ENCODE measurements at regions of chr3 and their contacts with region 1.

Region 1: DNA sequence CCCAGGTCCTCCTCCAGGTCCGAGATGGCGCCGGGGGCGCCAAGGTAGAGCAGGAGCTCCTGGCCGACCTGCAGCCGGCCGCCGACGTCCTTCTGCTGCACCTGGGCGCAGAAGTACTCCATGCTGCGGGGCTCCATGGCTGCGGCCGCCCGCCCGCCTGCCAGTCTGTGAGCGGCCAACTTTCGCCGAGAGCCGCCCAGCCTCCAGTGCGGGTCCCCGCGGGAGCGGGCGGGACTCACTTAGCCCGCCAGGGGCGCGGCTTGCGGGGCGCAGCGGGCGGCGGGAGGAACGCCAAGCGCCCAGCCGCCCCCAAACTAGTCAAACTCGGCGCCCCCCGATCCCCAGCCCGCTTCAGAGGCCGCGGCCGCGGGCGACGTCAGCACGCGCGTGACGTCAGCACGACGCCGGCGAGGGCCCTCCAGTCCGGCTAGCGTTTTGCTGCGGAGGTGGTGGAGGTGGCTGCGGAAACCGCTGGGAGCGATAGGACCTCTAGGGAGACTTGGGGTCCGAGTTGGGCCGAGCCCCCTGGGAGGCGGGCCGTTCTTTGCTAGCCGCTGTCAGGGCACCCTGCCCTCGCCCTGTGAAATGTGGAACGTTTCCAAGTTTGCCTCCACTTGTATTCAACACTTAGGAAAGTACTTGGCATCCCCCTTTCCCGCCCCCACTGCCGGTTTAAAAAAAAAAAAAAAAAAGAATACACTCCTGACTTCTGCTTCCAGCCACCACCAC is at the start of gene CLASP2:
- DNase-seq: peak; percentile 91
- H3K4me3 ChIP-seq: peak within 1 kb of the TSS; percentile 67 to 94 (median 76)
- H3K27ac ChIP-seq: peak within 1 kb of the TSS; percentile 76
- H3K4me1 ChIP-seq: peaks cover 18% of the 10 kb centered on the region
- H3K27me3 ChIP-seq: no peaks in the 10 kb centered on the region
- CTCF ChIP-seq: no peak
- POLR2A ChIP-seq: peak; percentile 88
- total RNA-seq, gene CLASP2: 55.0 and 62.9 TPM in 2 replicates

Region 2: GRCh38 chr3:33392703-33393125 is 325.3 kb before region 1 on chr3:
- CTCF ChIA-PET with region 1: no interaction called
- POLR2A ChIA-PET with region 1: no interaction called
- dilution Hi-C with region 1: no loop called
- intact Hi-C with region 1: loop called (anchors 5 kb)
- DNase-seq: peak; percentile 92
- H3K4me3 ChIP-seq: no peak overlapping the region
- H3K27ac ChIP-seq: peak overlapping the region; percentile 77
- H3K4me1 ChIP-seq: peaks cover 46% of the 10 kb centered on the region
- H3K27me3 ChIP-seq: no peaks in the 10 kb centered on the region
- CTCF ChIP-seq: no peak
- POLR2A ChIP-seq: no peak

Region 3: DNA sequence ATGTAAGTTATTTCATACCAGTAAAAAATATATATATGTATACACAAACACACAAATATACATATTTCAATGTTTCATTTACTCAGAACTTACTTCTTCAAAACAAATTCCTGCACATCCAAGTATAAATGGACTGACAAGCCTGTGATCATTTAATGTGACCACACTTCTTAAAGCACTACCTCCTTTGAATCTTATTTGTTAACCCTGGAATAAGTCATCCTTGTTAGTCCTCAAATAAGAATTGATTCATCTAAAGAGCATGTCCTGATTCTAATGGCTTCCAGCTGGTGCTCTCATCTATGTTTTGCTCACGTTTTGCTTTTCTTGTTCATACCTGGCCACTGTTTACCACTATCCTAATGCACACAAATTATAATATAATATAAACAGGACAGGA is 173.9 kb before region 1 on chr3:
- CTCF ChIA-PET with region 1: no interaction called
- POLR2A ChIA-PET with region 1: no interaction called
- dilution Hi-C with region 1: no loop called
- intact Hi-C with region 1: loop called (anchors 5 kb)
- DNase-seq: peak; percentile 16
- H3K4me3 ChIP-seq: no peak overlapping the region
- H3K27ac ChIP-seq: peak overlapping the region; percentile 56
- H3K4me1 ChIP-seq: peaks cover 13% of the 10 kb centered on the region
- H3K27me3 ChIP-seq: no peaks in the 10 kb centered on the region
- CTCF ChIP-seq: no peak
- POLR2A ChIP-seq: no peak

Region 4: DNA sequence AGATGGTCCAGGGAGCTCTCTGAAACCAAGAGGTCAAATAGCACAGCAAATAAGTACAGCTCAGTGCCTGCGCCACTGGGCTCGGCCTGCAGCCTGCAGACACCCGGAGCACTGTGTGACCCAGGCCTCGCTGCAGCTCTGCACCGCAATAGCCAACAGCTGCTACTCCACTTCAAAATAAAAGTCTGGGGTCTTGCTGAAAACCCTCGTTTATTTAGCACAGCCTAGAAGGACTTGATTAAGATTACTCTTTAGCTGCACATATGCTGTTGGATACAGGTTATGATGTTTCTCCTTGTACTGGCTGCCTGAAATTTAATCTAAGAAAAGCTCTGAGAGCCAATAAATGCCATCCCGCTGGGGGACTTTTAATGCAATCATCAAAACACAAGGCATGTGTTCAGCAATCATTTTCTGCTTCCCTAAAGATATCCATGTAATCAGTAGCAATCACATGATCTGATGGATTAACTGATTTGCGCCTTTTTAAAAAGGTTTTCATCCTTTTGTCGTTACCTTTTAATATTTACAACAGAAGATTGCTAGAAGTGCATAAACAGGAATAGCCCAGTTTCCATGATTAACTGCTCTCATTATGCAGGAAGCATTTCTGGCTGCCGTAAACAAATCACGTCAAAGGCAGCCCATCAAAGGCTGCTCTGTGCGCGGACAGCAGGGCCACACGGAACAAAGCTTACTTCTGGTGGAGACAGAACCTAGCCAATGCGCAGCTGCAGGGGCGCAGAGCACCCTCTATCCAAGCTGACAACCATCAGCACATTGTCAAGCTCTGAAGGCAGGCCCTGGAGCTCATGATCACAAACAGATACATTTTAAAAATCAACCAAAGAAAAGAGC is 58.8 kb before region 1 on chr3:
- CTCF ChIA-PET with region 1: interaction called, 12 read pairs
- POLR2A ChIA-PET with region 1: interaction called, 4 read pairs
- dilution Hi-C with region 1: no loop called
- intact Hi-C with region 1: loop called (anchors 1 kb)
- DNase-seq: peak; percentile 89
- H3K4me3 ChIP-seq: peak overlapping the region; percentile 7 to 57 (median 11)
- H3K27ac ChIP-seq: peak overlapping the region; percentile 39
- H3K4me1 ChIP-seq: peaks cover 36% of the 10 kb centered on the region
- H3K27me3 ChIP-seq: no peaks in the 10 kb centered on the region
- CTCF ChIP-seq: no peak
- POLR2A ChIP-seq: no peak

Region 5: DNA sequence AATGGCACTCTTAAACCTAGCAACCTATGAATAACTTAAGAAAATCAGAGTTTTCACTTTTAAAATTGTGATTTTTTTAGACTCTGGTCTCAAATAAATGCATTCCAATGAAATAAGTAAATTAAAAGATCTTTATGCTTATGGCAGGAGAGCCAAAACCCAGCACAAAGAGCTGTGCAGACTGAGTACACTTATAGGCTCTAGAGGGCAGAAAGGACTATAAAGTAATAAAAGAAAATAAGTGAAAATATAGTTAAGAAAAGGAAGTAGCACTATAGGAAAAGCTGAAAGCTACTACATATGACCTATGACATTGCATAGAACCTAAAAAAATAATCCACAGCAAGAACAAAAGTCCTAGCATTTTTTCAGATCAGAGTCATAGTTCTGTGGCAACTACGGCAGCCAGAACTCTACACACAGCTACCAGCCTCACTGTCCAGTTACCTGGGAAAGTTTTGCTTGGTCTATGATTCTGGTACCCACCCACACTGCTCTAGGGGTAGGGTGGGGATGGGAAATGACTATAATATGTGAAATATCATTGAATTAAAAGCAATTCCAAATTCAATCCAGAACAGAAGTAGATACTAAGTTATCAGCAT is 30.5 kb before region 1 on chr3:
- CTCF ChIA-PET with region 1: no interaction called
- POLR2A ChIA-PET with region 1: no interaction called
- dilution Hi-C with region 1: no loop called
- intact Hi-C with region 1: no loop called
- DNase-seq: peak; percentile 37
- H3K4me3 ChIP-seq: no peak overlapping the region
- H3K27ac ChIP-seq: no peak overlapping the region
- H3K4me1 ChIP-seq: peaks cover 8% of the 10 kb centered on the region
- H3K27me3 ChIP-seq: no peaks in the 10 kb centered on the region
- CTCF ChIP-seq: no peak
- POLR2A ChIP-seq: no peak

Region 6: DNA sequence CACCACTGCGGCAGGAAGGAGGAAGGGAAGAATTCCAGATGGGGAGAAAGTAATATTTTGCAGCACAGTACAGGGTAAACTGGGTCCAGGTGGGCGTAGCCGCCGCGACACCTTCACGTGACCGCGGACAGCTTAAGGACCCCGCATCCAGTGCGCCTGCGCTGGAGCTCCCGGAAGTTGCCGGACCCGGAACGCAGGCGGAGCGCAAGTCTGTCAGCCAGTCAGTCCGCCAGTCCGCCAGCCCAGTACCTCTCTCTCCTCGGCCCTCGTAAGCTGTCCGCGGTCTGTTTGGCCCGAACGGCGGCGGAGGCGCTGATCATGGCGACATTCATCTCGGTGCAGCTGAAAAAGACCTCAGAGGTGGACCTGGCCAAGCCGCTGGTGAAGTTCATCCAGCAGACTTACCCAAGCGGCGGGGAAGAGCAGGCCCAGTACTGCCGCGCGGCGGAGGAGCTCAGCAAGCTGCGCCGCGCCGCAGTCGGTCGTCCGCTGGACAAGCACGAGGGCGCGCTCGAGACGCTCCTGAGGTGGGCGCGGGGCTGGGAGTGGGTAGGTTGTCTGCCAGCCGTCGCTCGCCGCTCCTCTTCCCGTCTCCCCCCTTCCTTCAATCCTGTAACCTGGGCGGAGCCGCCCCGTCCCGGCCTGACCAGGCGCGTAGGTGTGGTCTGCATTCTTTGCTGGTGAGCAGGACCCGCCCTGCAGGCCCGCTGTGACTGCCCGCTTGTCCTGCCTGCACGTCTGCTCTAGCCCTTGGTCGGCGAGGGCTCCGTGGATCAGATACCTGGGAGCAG is 80.6 kb after region 1 on chr3 and contains the start of gene PDCD6IP:
- CTCF ChIA-PET with region 1: no interaction called
- POLR2A ChIA-PET with region 1: no interaction called
- dilution Hi-C with region 1: no loop called
- intact Hi-C with region 1: loop called (anchors 5 kb)
- DNase-seq: peak; percentile 96
- H3K4me3 ChIP-seq: peak within 1 kb of the TSS; percentile 78 to 95 (median 91)
- H3K27ac ChIP-seq: peak within 1 kb of the TSS; percentile 78
- H3K4me1 ChIP-seq: peaks cover 24% of the 10 kb centered on the region
- H3K27me3 ChIP-seq: no peaks in the 10 kb centered on the region
- CTCF ChIP-seq: no peak
- POLR2A ChIP-seq: peak; percentile 99
- total RNA-seq, gene PDCD6IP: 265 and 268 TPM in 2 replicates

Measured in endothelial cell of umbilical vein (primary cell).